HepG2 (cell line): ENCODE measurements at regions of chr9 and their contacts with region 1.

Region 1: GRCh38 chr9:96327694-96328352 is 25.8 kb upstream of the HSD17B3 start:
- DNase-seq: peak; percentile 51
- ATAC-seq: peak; percentile 71
- H3K4me3 ChIP-seq: no peak overlapping the region
- H3K27ac ChIP-seq: no peak overlapping the region
- H3K4me1 ChIP-seq: peaks cover 7% of the 10 kb centered on the region
- H3K27me3 ChIP-seq: no peaks in the 10 kb centered on the region
- CTCF ChIP-seq: peak; percentile 68
- EP300 ChIP-seq: no peak
- POLR2A ChIP-seq: no peak
- RAD21 ChIP-seq: 0 out of 2 replicates have a peak, but pooled peaks have one; percentile 51

Region 2: DNA sequence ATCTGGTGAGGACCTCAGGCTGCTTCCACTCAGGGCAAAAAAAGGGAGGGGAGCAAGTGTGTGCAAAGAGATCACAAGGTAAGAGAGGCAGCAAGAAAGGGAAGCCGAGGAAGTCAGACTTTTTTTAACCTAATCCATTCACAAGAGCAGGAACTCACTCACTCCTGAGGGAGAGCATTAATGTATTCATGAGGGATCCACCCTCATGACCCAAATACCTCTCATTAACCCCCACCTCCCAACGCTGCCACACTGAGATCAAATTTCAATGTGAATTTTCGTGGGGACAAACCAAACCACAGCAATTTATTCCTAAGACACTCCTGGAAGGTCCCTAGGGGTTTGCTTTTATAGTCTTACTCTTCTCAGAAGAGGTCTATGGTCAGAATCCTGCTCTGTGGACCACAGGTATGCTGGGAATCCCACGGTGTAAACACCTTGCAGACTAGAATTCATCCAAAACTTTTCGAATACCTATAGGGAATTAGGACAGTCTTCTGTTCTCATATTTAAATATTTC is 134.5 kb before region 1 on chr9:
- CTCF ChIA-PET with region 1: no interaction called
- POLR2A ChIA-PET with region 1: no interaction called
- in situ Hi-C with region 1: no loop called
- intact Hi-C with region 1: no loop called
- DNase-seq: no peak
- ATAC-seq: no peak
- H3K4me3 ChIP-seq: no peak overlapping the region
- H3K27ac ChIP-seq: no peak overlapping the region
- H3K4me1 ChIP-seq: no peaks in the 10 kb centered on the region
- H3K27me3 ChIP-seq: peaks cover 0 to 9% of the 10 kb centered on the region in 2 experiments; a peak in 1 of 5 replicates
- CTCF ChIP-seq: no peak
- EP300 ChIP-seq: no peak
- POLR2A ChIP-seq: no peak
- RAD21 ChIP-seq: no peak

Region 3: DNA sequence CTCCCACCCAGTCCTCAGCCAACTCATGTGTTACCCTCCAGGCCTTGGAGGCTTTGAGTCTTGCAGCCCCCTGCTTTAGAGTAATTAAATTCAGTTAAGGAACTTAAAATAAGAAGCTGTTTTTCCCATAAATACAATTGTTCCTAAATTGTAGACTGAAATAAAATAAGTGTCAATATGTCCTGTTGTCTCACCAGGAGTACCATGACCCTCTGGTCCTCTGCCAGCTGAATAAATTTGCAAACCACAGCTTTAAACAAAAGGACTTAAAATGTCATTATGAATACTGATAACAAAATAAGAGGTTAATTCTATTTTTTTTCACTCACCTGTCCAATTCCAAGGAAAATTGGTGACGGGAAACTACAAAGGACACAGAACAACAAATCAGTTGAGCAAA is 40.1 kb after region 1 on chr9:
- CTCF ChIA-PET with region 1: no interaction called
- POLR2A ChIA-PET with region 1: no interaction called
- in situ Hi-C with region 1: no loop called
- intact Hi-C with region 1: loop called (anchors 5 kb)
- DNase-seq: no peak
- ATAC-seq: no peak
- H3K4me3 ChIP-seq: no peak overlapping the region
- H3K27ac ChIP-seq: no peak overlapping the region
- H3K4me1 ChIP-seq: peaks cover 30% of the 10 kb centered on the region
- H3K27me3 ChIP-seq: no peaks in the 10 kb centered on the region
- CTCF ChIP-seq: no peak
- EP300 ChIP-seq: no peak
- POLR2A ChIP-seq: no peak
- RAD21 ChIP-seq: no peak

Region 4: DNA sequence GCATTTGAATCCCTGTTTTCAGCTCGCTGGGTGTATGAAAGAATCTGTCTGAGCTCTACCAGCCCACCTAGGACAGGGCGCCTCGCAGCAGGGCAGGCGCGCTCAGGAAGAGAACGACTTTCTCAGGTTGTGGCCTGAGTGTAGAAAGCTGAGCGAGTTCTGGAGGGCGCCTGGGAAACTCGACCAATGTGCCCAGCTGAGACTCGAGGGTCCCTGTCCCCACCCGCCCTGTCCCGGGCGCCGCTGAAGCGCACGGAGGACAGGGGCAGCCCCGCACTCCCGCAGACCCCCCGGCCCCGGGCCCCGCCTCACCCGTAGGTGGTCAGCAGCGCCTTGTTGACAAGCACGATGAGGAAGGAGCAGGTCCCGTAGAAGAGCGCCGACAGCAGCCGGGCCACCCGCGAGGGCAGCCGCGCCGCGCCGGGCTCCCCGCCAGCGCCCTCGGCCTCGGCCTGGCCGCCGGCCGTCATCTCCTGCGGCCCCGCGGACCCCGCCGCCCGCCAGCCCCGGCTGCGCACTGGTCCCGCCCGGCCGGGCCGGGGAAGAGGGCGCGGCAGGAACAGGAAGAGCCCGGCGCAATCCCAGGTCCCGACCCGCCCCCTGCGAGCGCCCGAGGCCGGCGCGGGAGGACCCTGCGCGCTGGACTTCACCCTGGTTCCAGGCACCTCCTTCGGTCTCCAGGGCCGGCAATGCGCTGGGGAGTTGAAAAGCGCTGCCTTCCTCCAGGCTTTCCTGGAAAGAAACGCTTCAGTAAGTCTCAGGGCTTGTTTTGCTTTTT is 55.5 kb after region 1 on chr9 and contains the start of gene SLC35D2:
- CTCF ChIA-PET with region 1: no interaction called
- POLR2A ChIA-PET with region 1: no interaction called
- in situ Hi-C with region 1: no loop called
- intact Hi-C with region 1: loop called (anchors 5 kb)
- DNase-seq: peak; percentile 73
- ATAC-seq: peak; percentile 93
- H3K4me3 ChIP-seq: peak within 1 kb of the TSS; percentile 63 to 87 (median 72)
- H3K27ac ChIP-seq: peak within 1 kb of the TSS; percentile 95
- H3K4me1 ChIP-seq: peaks cover 85% of the 10 kb centered on the region
- H3K27me3 ChIP-seq: no peaks in the 10 kb centered on the region; a peak in 1 of 5 replicates
- CTCF ChIP-seq: no peak
- EP300 ChIP-seq: no peak
- POLR2A ChIP-seq: peak; percentile 41 to 76; a peak in 3 of 4 replicates
- RAD21 ChIP-seq: no peak
- total RNA-seq, gene SLC35D2: 59.6 and 96.2 TPM in 2 replicates

Region 5: GRCh38 chr9:96418074-96418809 is 90.4 kb after region 1 on chr9 and contains the start of gene ZNF367:
- CTCF ChIA-PET with region 1: no interaction called
- POLR2A ChIA-PET with region 1: no interaction called
- in situ Hi-C with region 1: no loop called
- intact Hi-C with region 1: loop called (anchors 5 kb)
- DNase-seq: peak; percentile 95
- ATAC-seq: peak; percentile 81
- H3K4me3 ChIP-seq: peak within 1 kb of the TSS; percentile 84 to 89 (median 88)
- H3K27ac ChIP-seq: peak within 1 kb of the TSS; percentile 99
- H3K4me1 ChIP-seq: peaks cover 58% of the 10 kb centered on the region
- H3K27me3 ChIP-seq: no peaks in the 10 kb centered on the region; a peak in 1 of 5 replicates
- CTCF ChIP-seq: no peak
- EP300 ChIP-seq: no peak; a peak in 1 of 4 replicates
- POLR2A ChIP-seq: peak; percentile 67
- RAD21 ChIP-seq: peak; percentile 20; the same call in 1 of the 2 replicates
- total RNA-seq, gene ZNF367: 7.7 and 8.1 TPM in 2 replicates

Region 6: GRCh38 chr9:96436063-96436455 is 108.2 kb after region 1 on chr9:
- CTCF ChIA-PET with region 1: no interaction called
- POLR2A ChIA-PET with region 1: no interaction called
- in situ Hi-C with region 1: no loop called
- intact Hi-C with region 1: loop called (anchors 5 kb)
- DNase-seq: no peak
- ATAC-seq: no peak
- H3K4me3 ChIP-seq: peak overlapping the region in 1 of 3 experiments; percentile 35; a peak in 2 of 6 replicates
- H3K27ac ChIP-seq: peak overlapping the region; percentile 84
- H3K4me1 ChIP-seq: peaks cover 64% of the 10 kb centered on the region
- H3K27me3 ChIP-seq: no peaks in the 10 kb centered on the region
- CTCF ChIP-seq: no peak
- EP300 ChIP-seq: 0 out of 4 replicates have a peak, but pooled peaks of 1 of the 2 experiments have one; percentile 5
- POLR2A ChIP-seq: no peak
- RAD21 ChIP-seq: no peak

Region 7: DNA sequence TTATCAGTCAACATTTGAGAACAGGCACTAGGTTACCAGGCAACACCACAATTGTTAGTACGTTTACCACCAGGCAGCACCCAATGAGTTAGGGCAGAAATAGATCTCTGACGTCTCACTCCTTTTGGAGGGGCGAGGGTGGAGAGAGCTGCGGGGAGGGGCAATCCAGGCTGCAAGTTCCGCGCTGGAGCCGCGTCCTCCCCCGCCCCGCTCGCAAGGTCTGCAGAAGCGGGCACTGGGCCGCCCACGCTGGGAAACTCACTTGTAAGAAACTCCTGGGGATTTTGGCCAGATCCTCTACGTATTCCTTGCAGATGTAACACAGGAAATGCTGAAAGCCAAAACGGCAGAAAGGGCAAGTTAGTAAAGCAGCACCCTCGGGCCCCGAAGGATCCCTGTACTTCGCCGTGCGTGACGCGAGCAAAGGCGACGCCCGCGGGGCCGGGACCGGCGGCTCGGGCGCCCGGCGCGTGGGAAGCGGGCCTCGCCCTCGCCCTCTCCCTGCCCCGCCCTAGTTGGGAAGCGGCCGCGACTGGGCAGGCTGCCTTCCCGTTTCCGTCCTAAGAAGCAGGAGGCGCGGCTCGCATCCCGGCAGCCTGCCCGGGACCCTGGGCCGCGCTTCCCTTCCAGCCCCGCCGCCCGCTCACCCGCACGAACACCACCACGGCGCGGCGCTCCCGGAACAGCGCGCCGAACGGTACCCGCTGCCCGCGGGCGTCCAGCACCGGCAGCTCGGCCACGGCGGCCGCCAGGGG is 326.8 kb after region 1 on chr9:
- CTCF ChIA-PET with region 1: no interaction called
- POLR2A ChIA-PET with region 1: no interaction called
- in situ Hi-C with region 1: loop called (anchors 25 kb)
- intact Hi-C with region 1: no loop called
- DNase-seq: peak; percentile 41
- ATAC-seq: peak; percentile 73
- H3K4me3 ChIP-seq: peak overlapping the region; percentile 81 to 86 (median 81)
- H3K27ac ChIP-seq: peak overlapping the region; percentile 86
- H3K4me1 ChIP-seq: peaks cover 32% of the 10 kb centered on the region
- H3K27me3 ChIP-seq: no peaks in the 10 kb centered on the region; a peak in 1 of 5 replicates
- CTCF ChIP-seq: peak; percentile 40
- EP300 ChIP-seq: no peak
- POLR2A ChIP-seq: peak in 1 of 2 experiments; percentile 28; a peak in 1 of 4 replicates
- RAD21 ChIP-seq: no peak

Region 8: DNA sequence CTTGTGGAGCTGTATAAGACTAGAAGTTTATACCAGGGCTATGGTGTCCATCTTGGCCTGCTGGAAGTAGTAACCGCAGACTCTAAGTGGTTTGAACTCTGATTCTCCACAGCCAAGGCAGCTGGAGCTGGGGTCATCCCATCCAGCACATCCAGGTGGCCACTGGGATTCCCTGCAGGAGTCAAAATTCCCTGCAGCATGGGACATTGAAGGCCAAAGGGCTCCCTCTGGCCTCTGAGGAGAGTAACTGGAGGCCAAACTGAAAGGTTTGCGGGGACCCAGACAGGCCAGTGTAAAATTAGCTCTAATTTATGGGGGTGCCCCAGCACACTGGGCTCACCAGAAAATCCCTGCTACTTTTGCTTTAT is 339.5 kb after region 1 on chr9:
- CTCF ChIA-PET with region 1: interaction called, 9 read pairs
- POLR2A ChIA-PET with region 1: no interaction called
- in situ Hi-C with region 1: loop called (anchors 25 kb)
- intact Hi-C with region 1: loop called (anchors 1 kb)
- DNase-seq: no peak
- ATAC-seq: peak; percentile 57
- H3K4me3 ChIP-seq: no peak overlapping the region
- H3K27ac ChIP-seq: no peak overlapping the region
- H3K4me1 ChIP-seq: peaks cover 35% of the 10 kb centered on the region
- H3K27me3 ChIP-seq: no peaks in the 10 kb centered on the region
- CTCF ChIP-seq: peak; percentile 39; the same call in 1 of the 2 replicates
- EP300 ChIP-seq: no peak
- POLR2A ChIP-seq: no peak
- RAD21 ChIP-seq: no peak